Heart right ventricle (tissue), 16 donors: ENCODE measurements at regions of chr3 and their contacts with region 1.

Region 1: GRCh38 chr3:25664810-25665314 is at the start of gene TOP2B:
- DNase-seq: peak; percentile 95 to 97
- ATAC-seq: peak; percentile 98 to 100 (median 99)
- H3K4me3 ChIP-seq: peak within 1 kb of the TSS; percentile 64 to 89 (median 76)
- H3K27ac ChIP-seq: peak within 1 kb of the TSS; percentile 93 to 99 (median 98)
- H3K4me1 ChIP-seq: peaks cover 3 to 44% (median 42%) of the 10 kb centered on the region in 9 donors
- H3K27me3 ChIP-seq: no peaks in the 10 kb centered on the region
- CTCF ChIP-seq: no peak
- total RNA-seq, gene TOP2B: 87.4 to 126 (median 102) TPM

Region 2: GRCh38 chr3:25338152-25338725 is 326.6 kb before region 1 on chr3:
- intact Hi-C with region 1: no loop called
- DNase-seq: no peak
- ATAC-seq: no peak
- H3K4me3 ChIP-seq: no peak overlapping the region
- H3K27ac ChIP-seq: no peak overlapping the region
- H3K4me1 ChIP-seq: peaks cover 0 to 3% (median 0%) of the 10 kb centered on the region in 9 donors
- H3K27me3 ChIP-seq: no peaks in the 10 kb centered on the region
- CTCF ChIP-seq: no peak

Region 3: GRCh38 chr3:25782938-25783660 is 118.2 kb after region 1 on chr3 and contains the start of gene NGLY1:
- intact Hi-C with region 1: loop called in 9 of 10 experiments (anchors 2 to 5 kb)
- DNase-seq: peak; percentile 81 to 88
- ATAC-seq: peak; percentile 96 to 99 (median 97)
- H3K4me3 ChIP-seq: peak within 1 kb of the TSS; percentile 76 to 97 (median 92)
- H3K27ac ChIP-seq: peak within 1 kb of the TSS; percentile 49 to 97 (median 91)
- H3K4me1 ChIP-seq: peaks cover 3 to 39% (median 22%) of the 10 kb centered on the region in 9 donors
- H3K27me3 ChIP-seq: no peaks in the 10 kb centered on the region
- CTCF ChIP-seq: peak in 5 of 9 donors; percentile 12 to 44 (median 34)
- total RNA-seq, gene NGLY1: 23.4 to 40.3 (median 27.8) TPM

Region 4: GRCh38 chr3:25789596-25790556 is 125.0 kb after region 1 on chr3 and contains the start of gene OXSM:
- intact Hi-C with region 1: loop called in 5 of 10 experiments (anchors 2 to 5 kb)
- DNase-seq: peak; percentile 90 to 92
- ATAC-seq: peak; percentile 99
- H3K4me3 ChIP-seq: peak within 1 kb of the TSS; percentile 34 to 84 (median 62)
- H3K27ac ChIP-seq: peak within 1 kb of the TSS; percentile 14 to 94 (median 86)
- H3K4me1 ChIP-seq: peaks cover 0 to 33% (median 22%) of the 10 kb centered on the region in 9 donors
- H3K27me3 ChIP-seq: no peaks in the 10 kb centered on the region
- CTCF ChIP-seq: no peak
- total RNA-seq, gene OXSM: 12.7 to 18.0 (median 16.1) TPM